ENCODE measurements at regions of chr4 and their contacts with region 1.

Region 1: DNA sequence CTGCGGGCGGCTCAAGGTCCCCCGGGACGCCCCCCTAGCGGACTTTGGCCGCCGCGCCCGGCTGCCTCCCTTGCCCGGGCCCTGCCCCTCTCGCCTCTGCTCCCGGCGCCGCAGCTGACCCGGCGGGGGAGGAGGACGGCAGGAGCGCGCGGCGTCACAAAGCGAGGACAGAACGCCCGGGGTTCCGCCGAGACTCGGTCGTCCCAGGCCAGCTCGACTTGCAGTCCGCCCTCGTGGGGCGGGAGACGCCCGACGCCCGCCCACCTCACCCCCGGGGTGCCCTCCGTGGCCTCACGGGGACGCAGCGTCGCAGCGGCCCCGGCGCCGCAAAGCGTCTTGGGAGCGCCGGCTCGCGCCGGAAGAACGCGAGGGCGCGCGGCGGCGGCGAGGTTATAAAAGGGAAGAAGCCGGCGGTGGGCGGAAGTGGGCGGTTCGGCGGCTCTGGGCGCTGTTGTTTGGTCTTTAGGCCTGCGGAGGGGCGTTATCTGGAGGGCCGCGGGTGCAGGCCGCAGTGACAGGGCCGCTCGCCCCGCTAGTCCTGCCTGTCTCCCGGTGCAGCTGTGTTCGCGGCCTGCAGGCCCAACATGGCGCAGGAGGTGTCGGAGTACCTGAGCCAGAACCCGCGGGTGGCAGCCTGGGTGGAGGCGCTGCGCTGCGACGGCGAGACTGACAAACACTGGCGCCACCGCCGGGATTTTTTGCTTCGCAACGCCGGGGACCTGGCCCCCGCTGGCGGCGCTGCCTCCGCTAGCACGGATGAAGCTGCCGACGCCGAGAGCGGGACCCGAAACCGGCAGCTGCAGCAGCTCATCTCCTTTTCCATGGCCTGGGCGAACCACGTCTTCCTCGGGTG is at the start of gene CDKN2AIP:
- DNase-seq: peak; percentile 95
- ATAC-seq: peak; percentile 86
- H3K4me3 Mint-ChIP-seq: peak within 1 kb of the TSS; percentile 93
- H3K27ac Mint-ChIP-seq: peak within 1 kb of the TSS; percentile 96
- H3K4me1 Mint-ChIP-seq: peaks cover 40% of the 10 kb centered on the region
- H3K27me3 Mint-ChIP-seq: no peaks in the 10 kb centered on the region
- CTCF ChIP-seq: no peak
- total RNA-seq, gene CDKN2AIP: 26.4 to 26.6 TPM

Region 2: GRCh38 chr4:183407128-183407585 is 37.3 kb before region 1 on chr4:
- CTCF ChIA-PET with region 1: interaction called, 10 read pairs
- POLR2A ChIA-PET with region 1: interaction called, 13 read pairs
- intact Hi-C with region 1: no loop called
- DNase-seq: peak; percentile 93
- ATAC-seq: peak; percentile 96
- H3K4me3 Mint-ChIP-seq: peak overlapping the region; percentile 74
- H3K27ac Mint-ChIP-seq: peak overlapping the region; percentile 80
- H3K4me1 Mint-ChIP-seq: peaks cover 10% of the 10 kb centered on the region
- H3K27me3 Mint-ChIP-seq: no peaks in the 10 kb centered on the region
- CTCF ChIP-seq: peak; percentile 70

Region 3: DNA sequence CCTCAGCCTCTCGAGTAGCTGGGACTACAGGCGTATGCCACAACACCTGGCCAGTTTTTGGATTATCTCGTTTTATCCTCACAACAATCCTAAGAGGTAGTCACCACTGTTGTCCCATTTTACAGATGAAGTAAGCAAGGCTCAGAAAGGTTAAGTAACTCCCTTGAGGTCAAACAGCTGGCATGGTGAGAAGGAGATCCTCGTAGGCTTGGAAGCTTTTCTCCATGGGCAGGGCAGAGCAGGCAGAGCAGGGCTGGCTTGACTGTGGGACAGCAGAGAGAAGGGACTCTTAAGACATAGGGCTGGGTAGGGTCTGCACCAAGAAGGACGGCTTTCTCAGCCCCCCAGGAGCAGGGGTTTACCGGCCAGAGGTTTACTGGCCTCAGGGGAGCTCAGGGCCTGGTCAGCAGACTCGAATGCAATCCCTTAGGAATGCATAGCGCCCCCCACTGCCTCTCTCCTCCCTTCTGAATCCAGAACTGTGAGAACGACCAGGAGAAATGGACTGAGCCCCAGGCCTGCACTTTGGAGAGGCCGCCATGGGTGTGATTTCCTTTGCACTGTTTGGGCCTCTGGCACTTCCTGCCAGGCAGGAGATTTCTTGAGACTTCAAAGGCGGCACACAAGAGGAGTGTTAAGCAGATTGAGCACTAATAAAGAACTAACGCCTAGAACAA is 14.0 kb before region 1 on chr4:
- CTCF ChIA-PET with region 1: interaction called, 3 read pairs
- POLR2A ChIA-PET with region 1: interaction called, 16 read pairs
- intact Hi-C with region 1: no loop called
- DNase-seq: peak; percentile 41
- ATAC-seq: peak; percentile 88
- H3K4me3 Mint-ChIP-seq: no peak overlapping the region
- H3K27ac Mint-ChIP-seq: peak overlapping the region; percentile 55
- H3K4me1 Mint-ChIP-seq: peaks cover 31% of the 10 kb centered on the region
- H3K27me3 Mint-ChIP-seq: no peaks in the 10 kb centered on the region
- CTCF ChIP-seq: no peak

Region 4: DNA sequence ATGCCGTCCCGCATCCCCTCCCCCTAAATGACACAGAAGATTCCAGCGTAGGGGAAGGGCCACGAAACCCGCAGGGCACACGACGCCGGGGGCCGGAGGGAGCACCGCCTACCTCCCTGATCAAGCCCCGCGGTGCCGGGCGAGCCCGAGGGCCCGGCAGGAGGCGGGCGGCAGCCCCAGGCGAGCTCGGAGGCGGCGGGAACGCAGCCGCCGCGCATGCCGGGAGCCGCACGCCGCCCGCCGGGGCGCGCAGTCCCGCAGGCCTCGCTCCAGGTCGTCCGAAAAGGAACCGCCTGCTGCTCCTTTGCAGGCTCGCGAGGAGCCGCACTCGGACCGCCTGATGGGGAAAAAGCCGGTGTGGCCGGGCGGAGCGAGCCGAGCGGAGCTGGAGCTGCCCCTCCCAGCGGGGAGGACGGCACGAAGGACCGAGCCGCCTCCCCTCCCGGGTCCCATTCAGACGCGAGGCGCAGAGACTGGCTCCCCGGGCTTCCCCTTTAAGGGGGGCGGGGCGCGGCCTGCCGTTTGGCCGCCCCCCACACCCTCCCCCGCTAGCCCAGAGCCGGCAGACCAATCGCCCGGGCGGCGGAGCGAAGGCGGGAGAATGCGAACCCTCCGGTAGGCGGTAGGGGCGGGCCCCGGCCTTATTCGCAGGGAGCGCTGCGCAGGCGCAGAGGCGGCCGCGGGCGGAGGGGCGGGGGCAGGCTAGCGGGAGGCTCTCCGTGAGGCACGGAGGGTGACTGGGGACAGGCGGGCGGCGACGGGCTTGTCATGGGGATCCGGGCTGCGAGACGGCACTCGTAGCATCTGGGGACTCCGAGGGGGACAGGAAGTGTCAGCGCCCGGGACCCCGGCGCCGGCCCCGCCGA is 59.9 kb after region 1 on chr4:
- CTCF ChIA-PET with region 1: interaction called, 3 read pairs
- POLR2A ChIA-PET with region 1: interaction called, 28 read pairs
- intact Hi-C with region 1: loop called (anchors 2 kb)
- DNase-seq: peak; percentile 99
- ATAC-seq: peak; percentile 82
- H3K4me3 Mint-ChIP-seq: peak overlapping the region; percentile 93
- H3K27ac Mint-ChIP-seq: peak overlapping the region; percentile 93
- H3K4me1 Mint-ChIP-seq: peaks cover 36% of the 10 kb centered on the region
- H3K27me3 Mint-ChIP-seq: no peaks in the 10 kb centered on the region
- CTCF ChIP-seq: no peak

Measured in activated CD8-positive, alpha-beta T cell treated with anti-CD3 and anti-CD28 coated beads for 36 hours (primary cell).